ENCODE measurements at regions of chr22 and their contacts with region 1.

Region 1: GRCh38 chr22:17501679-17502285 is 61.5 kb upstream of the SLC25A18 start:
- DNase-seq: peak; percentile 86
- H3K4me3 Mint-ChIP-seq: no peak overlapping the region
- H3K27ac Mint-ChIP-seq: no peak overlapping the region
- H3K4me1 Mint-ChIP-seq: no peaks in the 10 kb centered on the region
- H3K27me3 Mint-ChIP-seq: peaks cover 4% of the 10 kb centered on the region

Region 2: DNA sequence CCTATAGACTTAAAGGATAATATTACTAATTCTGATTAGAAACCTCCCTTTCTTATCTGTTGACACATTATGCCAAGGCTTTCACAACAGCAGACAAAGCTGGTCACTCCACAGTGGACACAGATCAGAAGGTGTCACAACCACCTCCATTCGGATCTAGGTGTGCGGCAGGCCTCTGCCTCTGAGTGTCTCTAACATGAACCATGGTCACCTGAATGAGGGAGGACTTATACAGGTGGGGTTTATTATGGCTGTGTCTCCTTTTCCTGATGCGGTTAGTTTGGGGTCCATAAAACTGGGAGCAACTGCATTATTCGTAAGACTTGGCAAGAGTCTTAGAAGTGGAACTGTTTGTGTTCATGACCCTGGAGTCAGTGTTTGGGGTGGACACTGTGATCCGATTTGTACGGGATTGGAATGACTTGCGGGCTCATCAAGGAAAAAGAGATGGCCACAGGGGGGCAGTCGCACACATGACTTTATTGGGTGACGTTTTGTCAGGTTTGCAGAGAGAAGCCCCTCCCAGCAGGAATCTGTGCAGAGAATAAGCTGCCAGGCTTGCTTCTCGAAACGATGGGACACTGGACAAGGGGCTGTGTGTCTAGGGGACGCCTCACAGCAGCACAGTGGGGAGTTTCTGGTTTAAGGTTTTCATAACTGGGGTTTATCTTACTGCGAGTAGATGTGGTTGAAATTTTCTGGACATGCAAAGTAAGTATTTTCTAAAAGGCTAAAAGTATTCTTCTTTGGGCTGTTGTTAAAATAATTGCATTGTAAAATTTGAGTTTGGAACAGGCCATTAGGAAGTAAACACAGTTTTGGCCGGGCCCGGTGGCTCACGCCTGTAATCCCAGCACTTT is 584.4 kb before region 1 on chr22:
- intact Hi-C with region 1: loop called (anchors 5 kb)
- DNase-seq: peak; percentile 86
- H3K4me3 Mint-ChIP-seq: no peak overlapping the region
- H3K27ac Mint-ChIP-seq: no peak overlapping the region
- H3K4me1 Mint-ChIP-seq: peaks cover 5% of the 10 kb centered on the region
- H3K27me3 Mint-ChIP-seq: peaks cover 16% of the 10 kb centered on the region

Region 3: DNA sequence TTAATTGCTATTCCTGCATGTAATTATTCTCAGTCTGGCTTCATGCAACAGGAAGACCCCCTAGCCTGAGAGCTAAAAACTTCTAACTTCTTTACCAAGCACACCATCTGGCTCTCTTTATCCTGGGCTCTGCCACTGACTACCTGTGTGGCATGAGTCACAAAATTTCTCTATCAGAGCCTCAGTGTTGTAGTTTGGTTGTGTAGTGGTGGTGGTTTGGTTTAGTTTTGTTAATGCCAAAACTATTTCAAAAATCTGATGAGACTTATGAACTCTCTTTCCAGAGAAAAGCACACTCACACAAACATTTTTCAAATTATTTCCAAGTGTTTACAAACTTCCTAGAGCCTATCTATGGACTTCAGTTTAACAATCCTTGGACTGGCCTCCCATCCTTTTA is 424.5 kb before region 1 on chr22:
- intact Hi-C with region 1: loop called (anchors 1 kb)
- DNase-seq: no peak
- H3K4me3 Mint-ChIP-seq: no peak overlapping the region
- H3K27ac Mint-ChIP-seq: no peak overlapping the region
- H3K4me1 Mint-ChIP-seq: peaks cover 18% of the 10 kb centered on the region
- H3K27me3 Mint-ChIP-seq: peaks cover 29% of the 10 kb centered on the region

Region 4: DNA sequence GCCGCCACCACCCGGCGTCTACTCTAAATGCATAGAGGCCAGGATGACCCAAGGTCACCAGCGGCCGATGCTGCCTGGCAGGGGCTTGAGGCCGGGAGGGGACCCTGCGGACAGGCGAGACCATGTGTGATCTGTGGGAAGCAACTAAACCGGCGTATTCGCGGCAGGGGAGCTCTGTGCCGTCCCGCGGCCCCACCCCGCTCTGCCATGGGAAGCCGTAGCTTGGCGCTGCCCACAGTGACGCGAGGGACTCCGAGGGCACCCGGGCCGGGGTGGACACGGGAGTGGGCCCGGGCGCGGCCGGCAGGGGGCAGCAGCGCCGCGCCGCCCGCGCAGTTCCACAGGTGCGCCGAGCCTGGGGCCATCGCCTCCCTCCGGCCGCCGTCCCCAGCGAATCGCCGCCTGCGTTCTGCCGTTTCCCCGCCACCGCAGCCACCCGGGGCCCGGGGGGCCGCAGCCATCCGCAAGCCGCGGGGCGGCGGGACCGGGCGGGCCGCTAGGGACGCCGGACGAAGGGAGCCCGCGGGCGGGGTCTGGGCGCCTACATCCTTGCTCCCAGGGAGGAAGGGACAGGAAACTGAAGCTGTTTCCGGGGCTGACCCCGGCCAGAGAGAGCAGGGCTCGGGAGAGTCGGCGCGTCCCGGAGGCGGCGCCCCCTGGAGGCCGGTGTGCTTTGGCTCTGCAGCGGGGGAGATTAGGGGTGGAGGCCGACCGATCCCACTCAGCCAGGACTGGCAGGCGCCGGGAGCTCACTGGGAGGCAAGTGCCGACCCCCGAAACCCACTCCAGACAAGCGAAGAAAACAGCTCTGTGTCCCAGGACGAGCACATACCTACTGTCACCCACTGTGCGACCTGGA is 330.2 kb before region 1 on chr22:
- intact Hi-C with region 1: loop called (anchors 1 kb)
- DNase-seq: peak; percentile 94
- H3K4me3 Mint-ChIP-seq: peak overlapping the region; percentile 87
- H3K27ac Mint-ChIP-seq: peak overlapping the region; percentile 46
- H3K4me1 Mint-ChIP-seq: peaks cover 6% of the 10 kb centered on the region
- H3K27me3 Mint-ChIP-seq: peaks cover 8% of the 10 kb centered on the region

Region 5: DNA sequence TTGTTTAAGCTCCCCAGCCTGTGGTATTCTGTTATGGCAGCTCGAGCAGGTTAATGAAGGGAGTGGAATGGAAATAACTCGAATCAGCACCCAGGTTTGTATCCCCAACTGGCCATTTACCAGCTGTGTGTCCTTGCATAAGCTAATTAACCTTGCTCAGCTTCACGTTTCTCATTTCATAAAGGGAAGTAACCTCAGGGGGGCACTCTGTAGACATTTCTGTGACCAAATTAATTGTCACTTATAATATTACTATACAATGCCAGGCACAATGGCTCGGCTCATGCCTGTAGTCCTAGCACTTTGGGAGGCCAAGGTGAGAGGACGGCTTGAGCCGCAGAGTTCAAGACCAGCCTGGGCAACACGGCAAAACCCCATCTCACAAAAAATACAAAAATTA is 296.4 kb before region 1 on chr22:
- intact Hi-C with region 1: loop called (anchors 1 kb)
- DNase-seq: no peak
- H3K4me3 Mint-ChIP-seq: no peak overlapping the region
- H3K27ac Mint-ChIP-seq: no peak overlapping the region
- H3K4me1 Mint-ChIP-seq: peaks cover 5% of the 10 kb centered on the region
- H3K27me3 Mint-ChIP-seq: no peaks in the 10 kb centered on the region

Measured in activated CD4-positive, alpha-beta T cell treated with anti-CD3 and anti-CD28 coated beads, Interleukin-2, amount 10 ng/mL, durations not matched to agents 24 days and 14 days (primary cell).